Dendritic cell treated with granulocyte-macrophage colony-stimulating factor and Interleukin-4, amounts not matched to agents 40 ng/mL and 50 ng/mL, for 4 days (primary cell): ENCODE measurements at regions of chr4 and their contacts with region 1.

Region 1: DNA sequence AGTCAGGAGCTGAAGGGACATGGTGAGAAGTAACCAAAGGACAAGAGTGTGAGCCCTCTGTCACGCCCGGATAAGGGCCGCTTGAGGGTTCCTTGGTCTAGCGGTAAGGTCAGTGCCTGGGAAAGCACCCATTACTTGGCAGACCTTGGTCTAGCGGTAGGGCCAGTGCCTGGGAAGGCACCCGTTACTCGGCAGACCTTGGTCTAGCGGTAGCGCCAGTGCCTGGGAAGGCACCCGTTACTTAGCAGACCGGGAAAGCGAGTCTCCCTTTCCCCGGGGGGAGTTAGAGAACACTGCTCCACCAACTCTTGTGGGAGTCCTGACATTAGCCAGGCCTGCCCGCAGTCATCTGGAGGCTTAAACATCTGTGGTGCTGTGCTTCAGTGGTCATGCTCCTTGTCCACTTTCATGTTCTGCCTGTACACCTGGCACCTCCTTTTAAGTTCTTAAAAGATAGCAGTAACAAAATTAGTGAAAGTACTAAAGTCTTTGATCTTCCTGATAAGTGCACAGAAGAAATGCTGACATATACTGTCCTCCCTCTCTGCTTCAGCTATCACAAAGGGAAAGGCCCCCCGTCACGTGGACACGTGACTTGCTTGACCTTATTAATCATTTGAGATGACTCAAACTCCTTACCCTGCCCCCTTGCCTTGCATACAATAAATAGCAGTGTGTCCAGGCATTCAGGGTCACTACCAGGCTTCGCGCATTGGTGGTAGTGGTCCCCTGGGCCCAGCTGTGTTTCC is 9.3 kb upstream of the SEC24B start:
- H3K4me3 Mint-ChIP-seq: no peak overlapping the region
- H3K27ac Mint-ChIP-seq: no peak overlapping the region
- H3K4me1 Mint-ChIP-seq: peaks cover 6% of the 10 kb centered on the region
- H3K27me3 Mint-ChIP-seq: no peaks in the 10 kb centered on the region

Region 2: DNA sequence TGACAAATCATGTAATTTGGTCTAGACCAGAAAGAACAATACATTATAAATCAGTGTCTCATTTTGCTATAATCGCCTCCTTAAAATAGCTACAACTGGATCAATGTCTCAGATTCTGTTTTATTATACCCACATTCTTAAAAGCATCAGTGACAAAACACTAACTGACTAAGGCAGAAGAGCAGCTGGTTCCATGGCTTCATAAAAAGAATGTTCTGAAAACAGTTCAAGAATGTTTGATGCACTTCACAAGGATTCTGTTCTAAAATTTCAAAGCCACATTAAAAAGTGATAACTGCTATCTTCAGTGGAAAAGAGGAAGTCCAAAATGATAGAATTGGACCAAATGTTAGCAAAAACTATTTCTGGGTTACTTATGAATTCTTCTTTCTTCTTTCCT is 191.6 kb before region 1 on chr4:
- intact Hi-C with region 1: no loop called
- H3K4me3 Mint-ChIP-seq: no peak overlapping the region
- H3K27ac Mint-ChIP-seq: no peak overlapping the region
- H3K4me1 Mint-ChIP-seq: no peaks in the 10 kb centered on the region
- H3K27me3 Mint-ChIP-seq: no peaks in the 10 kb centered on the region

Region 3: DNA sequence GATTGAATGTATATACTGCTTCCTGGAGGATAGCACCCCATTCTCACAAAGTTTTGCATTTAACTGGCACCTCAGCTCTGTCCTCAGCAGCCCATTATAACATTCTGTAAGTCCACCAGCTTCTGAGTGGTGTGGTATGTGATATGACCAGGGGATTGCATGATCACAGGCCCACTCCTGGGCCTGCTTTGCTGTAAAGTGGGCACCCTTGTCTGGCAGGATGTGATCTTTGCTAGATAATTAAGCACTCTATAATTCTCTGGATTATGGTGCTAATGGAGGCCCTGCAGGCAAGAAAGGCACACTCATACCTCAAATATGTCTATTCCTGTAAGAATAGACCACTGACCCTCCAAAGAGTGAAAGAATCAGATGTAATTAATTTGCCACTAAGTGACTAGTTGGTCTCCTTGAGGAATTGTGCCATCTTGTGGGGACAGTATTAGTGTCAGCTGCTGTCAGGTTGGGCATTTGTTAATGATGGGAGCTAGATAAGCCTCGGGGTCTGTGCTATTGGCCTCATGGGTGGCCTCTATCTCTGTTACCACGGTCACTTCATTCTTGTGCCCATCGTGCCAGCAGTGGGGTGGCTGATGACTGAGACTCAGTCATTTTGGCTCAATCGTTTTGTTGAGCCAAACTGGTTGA is 379.8 kb after region 1 on chr4:
- intact Hi-C with region 1: loop called (anchors 5 kb)
- H3K4me3 Mint-ChIP-seq: no peak overlapping the region
- H3K27ac Mint-ChIP-seq: no peak overlapping the region
- H3K4me1 Mint-ChIP-seq: peaks cover 11% of the 10 kb centered on the region
- H3K27me3 Mint-ChIP-seq: no peaks in the 10 kb centered on the region

Region 4: DNA sequence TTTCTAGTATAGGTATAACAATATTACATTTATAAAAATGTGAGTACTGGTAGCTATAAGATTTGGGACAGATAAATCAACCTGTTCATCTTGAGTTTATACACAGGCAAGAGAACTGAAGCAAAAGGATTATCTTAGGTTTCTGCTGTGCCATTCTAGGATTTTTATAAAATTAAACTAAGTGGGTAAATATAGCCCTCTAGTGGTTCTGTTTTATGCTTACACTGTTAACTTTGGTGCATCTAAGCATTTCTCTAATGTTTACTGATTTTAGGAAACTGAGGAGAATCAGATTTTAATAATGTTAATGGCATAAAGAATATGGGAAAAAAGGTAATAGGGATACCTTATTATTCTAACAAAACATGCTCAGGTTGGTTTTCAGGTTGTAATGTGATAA is 402.5 kb after region 1 on chr4:
- intact Hi-C with region 1: loop called (anchors 1 kb)
- H3K4me3 Mint-ChIP-seq: no peak overlapping the region
- H3K27ac Mint-ChIP-seq: no peak overlapping the region
- H3K4me1 Mint-ChIP-seq: no peaks in the 10 kb centered on the region
- H3K27me3 Mint-ChIP-seq: no peaks in the 10 kb centered on the region

Region 5: DNA sequence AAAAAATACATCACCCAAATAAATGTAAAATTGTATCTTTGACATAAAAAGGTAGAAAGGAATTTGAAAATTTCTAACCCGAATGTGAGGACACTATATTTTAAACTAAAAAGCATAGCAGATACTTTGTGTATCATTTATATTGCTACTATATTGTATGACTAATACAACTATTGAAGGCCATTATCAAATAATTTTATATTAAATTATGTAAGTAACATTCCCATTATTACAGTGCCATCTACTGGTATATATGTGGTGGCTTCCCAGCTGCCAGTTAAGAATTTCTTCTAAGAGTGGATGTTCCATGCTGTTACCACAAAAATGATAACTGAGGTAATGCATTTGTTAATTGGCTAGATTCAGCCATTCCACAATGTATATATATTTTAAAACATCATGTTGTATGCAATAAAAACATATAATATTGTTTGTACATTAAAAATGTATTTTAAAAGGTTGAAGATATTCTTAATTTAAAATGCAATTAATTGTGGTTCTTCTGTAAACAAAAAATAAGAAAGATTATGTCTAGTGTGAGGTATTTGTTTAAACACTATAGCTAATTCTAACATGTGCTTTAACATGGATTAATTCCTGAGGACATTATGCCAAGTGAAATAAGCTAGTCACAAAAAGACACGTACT is 553.7 kb after region 1 on chr4:
- intact Hi-C with region 1: loop called (anchors 5 kb)
- H3K4me3 Mint-ChIP-seq: no peak overlapping the region
- H3K27ac Mint-ChIP-seq: no peak overlapping the region
- H3K4me1 Mint-ChIP-seq: peaks cover 14% of the 10 kb centered on the region
- H3K27me3 Mint-ChIP-seq: peaks cover 24% of the 10 kb centered on the region